GM12878 (cell line): ENCODE measurements at regions of chr6 and their contacts with region 1.

Region 1: GRCh38 chr6:138692058-138692977 is 81.3 kb upstream of the CCDC28A start:
- DNase-seq: no peak
- ATAC-seq: peak; percentile 74
- H3K4me3 ChIP-seq: peak overlapping the region; percentile 71
- H3K27ac ChIP-seq: no peak overlapping the region
- H3K4me1 ChIP-seq: no peaks in the 10 kb centered on the region
- H3K27me3 ChIP-seq: no peaks in the 10 kb centered on the region
- CTCF ChIP-seq: peak; percentile 58 to 74 (median 72); a peak in 5 of 6 replicates
- EP300 ChIP-seq: no peak
- POLR2A ChIP-seq: no peak
- RAD21 ChIP-seq: peak; percentile 37; the same call in 1 of the 2 replicates

Region 2: DNA sequence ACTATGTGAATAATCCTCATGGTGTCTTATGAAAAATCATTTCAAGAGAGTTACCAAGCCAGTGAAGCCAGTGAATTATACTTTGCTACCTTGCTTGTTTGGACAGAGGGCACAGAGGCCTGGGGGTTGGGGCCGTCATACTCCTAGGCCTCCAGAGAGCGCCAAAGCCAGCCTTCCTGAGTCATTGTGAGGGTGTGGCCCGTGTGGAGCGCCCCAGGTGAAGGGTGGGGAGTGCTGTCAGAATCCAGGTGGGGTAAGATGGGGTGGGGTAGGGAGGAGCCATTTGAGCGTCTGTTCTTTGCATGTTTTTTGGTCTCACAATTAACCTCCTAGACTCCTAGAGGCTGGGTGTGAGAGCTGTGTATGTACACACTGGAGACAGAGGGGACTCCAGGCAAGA is 656.2 kb before region 1 on chr6:
- CTCF ChIA-PET with region 1: no interaction called
- POLR2A ChIA-PET with region 1: no interaction called
- RAD21 ChIA-PET with region 1: no interaction called
- SMC1A ChIA-PET with region 1: no interaction called
- in situ Hi-C with region 1: no loop called
- intact Hi-C with region 1: no loop called
- DNase-seq: no peak
- ATAC-seq: no peak
- H3K4me3 ChIP-seq: no peak overlapping the region
- H3K27ac ChIP-seq: no peak overlapping the region
- H3K4me1 ChIP-seq: no peaks in the 10 kb centered on the region
- H3K27me3 ChIP-seq: no peaks in the 10 kb centered on the region; a peak in 1 of 4 replicates
- CTCF ChIP-seq: no peak
- EP300 ChIP-seq: no peak
- POLR2A ChIP-seq: no peak
- RAD21 ChIP-seq: no peak

Region 3: DNA sequence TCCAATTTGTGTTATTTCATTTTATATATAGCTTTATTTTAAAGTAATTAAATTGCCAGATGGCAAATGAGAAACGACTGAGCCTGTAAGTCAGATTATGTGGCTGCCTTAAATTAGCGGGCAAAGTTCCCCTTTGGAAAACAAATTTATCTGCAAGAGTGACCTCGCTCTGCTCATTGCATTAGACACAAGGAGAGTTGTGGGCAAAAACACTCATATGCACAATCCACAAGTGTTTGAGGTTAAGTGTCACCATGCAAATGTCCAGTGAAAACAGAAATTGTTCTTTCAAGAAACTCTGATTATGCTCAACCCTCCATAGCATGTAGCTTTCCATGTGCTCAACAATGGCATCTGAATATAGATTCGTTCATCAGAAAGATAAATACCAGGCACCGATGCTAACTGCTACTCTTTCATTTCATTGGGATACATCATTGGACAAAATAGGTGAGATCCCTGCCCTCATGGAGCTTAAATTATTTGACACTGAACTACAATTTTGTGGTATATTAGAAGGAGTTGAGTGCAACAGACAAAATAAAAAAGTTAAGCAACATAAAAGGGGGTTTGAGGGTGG is 191.4 kb before region 1 on chr6:
- CTCF ChIA-PET with region 1: no interaction called
- POLR2A ChIA-PET with region 1: no interaction called
- RAD21 ChIA-PET with region 1: no interaction called
- SMC1A ChIA-PET with region 1: no interaction called
- in situ Hi-C with region 1: no loop called
- intact Hi-C with region 1: no loop called
- DNase-seq: no peak
- ATAC-seq: no peak
- H3K4me3 ChIP-seq: no peak overlapping the region
- H3K27ac ChIP-seq: no peak overlapping the region
- H3K4me1 ChIP-seq: no peaks in the 10 kb centered on the region
- H3K27me3 ChIP-seq: peaks cover 0 to 10% of the 10 kb centered on the region in 2 experiments; a peak in 2 of 4 replicates
- CTCF ChIP-seq: no peak
- EP300 ChIP-seq: no peak
- POLR2A ChIP-seq: no peak
- RAD21 ChIP-seq: no peak

Region 4: DNA sequence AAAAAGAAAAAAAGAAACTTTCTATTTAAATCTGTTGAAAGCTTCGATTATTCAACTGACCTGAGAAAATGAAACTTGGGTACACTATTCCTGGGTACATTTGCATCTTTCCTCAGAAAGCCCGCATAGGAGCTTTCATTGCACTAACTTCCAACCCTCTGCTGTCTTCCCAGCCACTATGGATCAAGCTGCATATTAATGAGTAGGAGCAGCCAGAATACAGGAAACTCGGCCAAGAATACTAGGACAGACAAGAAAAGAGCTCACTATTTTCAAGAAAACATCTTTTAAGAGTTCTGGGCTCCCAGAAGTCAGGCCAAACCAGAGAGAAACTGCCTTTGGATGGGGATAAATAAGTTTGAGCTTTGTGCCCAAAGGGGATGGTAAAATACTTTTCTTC is 53.7 kb before region 1 on chr6:
- CTCF ChIA-PET with region 1: interaction called, 29 read pairs
- POLR2A ChIA-PET with region 1: interaction called, 8 read pairs
- RAD21 ChIA-PET with region 1: interaction called, 24 read pairs
- SMC1A ChIA-PET with region 1: interaction called, 12 read pairs
- in situ Hi-C with region 1: no loop called
- intact Hi-C with region 1: no loop called
- DNase-seq: no peak
- ATAC-seq: no peak; the same call in 1 of the 3 replicates
- H3K4me3 ChIP-seq: peak overlapping the region; percentile 52; the same call in 1 of the 2 replicates
- H3K27ac ChIP-seq: no peak overlapping the region
- H3K4me1 ChIP-seq: no peaks in the 10 kb centered on the region
- H3K27me3 ChIP-seq: no peaks in the 10 kb centered on the region
- CTCF ChIP-seq: no peak
- EP300 ChIP-seq: no peak
- POLR2A ChIP-seq: no peak
- RAD21 ChIP-seq: no peak

Region 5: DNA sequence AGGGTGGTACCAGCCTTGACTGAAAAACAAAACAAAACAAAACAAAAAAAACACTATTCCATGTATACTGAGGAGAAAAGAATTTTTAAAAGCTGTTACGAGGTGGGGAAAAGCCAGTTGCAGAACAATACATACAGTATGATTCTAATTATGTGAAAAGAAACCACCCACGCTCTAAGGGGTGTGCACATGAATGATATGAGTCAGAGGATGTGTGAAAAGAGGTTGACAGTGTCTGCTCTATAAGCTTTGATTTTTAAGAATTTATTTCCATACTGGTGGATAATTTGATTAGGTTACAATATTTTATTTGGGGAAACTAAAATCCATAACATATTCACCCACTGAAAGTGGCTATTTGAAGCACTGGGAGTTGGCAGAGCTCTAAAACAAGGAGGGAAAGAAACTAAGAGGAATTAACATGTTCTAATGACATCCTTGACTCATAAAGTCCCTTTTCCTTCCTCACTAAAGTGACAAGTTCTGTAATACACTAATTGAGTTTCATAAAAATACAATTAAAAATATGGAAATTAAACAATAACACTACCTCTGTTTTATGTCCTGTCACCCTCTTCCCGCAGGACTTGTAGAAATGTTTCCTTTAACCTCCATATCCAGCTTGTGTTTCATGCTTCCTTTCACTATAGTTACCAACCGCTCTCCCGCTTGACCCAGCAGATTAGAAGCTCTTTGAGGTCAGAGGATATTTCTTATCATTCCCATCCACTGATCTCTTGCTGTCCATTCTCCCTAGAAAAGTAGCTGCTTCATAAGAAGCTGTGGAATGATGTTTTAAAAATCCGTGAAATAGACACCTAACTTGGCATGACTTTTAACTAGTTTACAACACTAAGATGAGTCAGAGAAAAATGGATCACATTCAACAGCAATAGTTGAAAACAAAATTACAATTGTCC is 37.3 kb before region 1 on chr6:
- CTCF ChIA-PET with region 1: interaction called, 9 read pairs
- POLR2A ChIA-PET with region 1: no interaction called
- RAD21 ChIA-PET with region 1: interaction called, 4 read pairs
- SMC1A ChIA-PET with region 1: interaction called, 15 read pairs
- in situ Hi-C with region 1: no loop called
- intact Hi-C with region 1: no loop called
- DNase-seq: peak; percentile 50
- ATAC-seq: peak; percentile 98
- H3K4me3 ChIP-seq: no peak overlapping the region
- H3K27ac ChIP-seq: no peak overlapping the region
- H3K4me1 ChIP-seq: peaks cover 9% of the 10 kb centered on the region
- H3K27me3 ChIP-seq: no peaks in the 10 kb centered on the region
- CTCF ChIP-seq: no peak
- EP300 ChIP-seq: peak; percentile 71 to 95; a peak in 3 of 4 replicates
- POLR2A ChIP-seq: no peak
- RAD21 ChIP-seq: no peak

Region 6: DNA sequence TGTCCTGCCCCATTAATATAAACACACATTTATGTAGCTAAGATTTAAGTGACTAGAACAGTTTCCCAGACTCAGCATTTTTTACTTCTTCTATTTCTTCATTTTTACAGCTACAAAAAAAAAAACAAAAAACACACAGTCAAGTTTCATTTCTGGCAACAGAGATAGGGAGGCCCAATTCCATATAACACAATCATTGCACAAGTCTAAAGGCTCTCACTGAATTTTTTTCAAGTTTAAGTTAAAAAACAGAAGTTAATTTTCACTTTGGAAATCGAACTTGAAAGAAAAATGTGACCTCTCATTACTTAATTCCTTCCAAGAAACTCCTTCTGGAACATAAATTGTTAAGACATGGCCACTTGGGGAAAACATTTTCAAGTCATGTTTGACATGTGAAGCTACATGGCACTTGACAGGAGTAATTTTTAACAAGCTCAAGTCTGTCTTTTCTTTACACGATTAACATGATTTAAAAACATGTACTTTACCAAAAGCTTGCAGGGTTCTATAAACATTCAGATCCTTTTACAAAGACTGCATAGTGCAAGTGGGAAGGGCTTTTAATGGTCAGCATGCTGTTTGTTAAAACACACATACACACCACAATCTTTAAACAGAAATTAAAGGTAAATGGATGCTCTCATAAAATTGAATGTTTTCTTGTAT is 18.8 kb before region 1 on chr6:
- CTCF ChIA-PET with region 1: interaction called, 77 read pairs
- POLR2A ChIA-PET with region 1: interaction called, 5 read pairs
- RAD21 ChIA-PET with region 1: interaction called, 3 read pairs
- SMC1A ChIA-PET with region 1: interaction called, 11 read pairs
- in situ Hi-C with region 1: no loop called
- intact Hi-C with region 1: no loop called
- DNase-seq: no peak
- ATAC-seq: no peak
- H3K4me3 ChIP-seq: no peak overlapping the region
- H3K27ac ChIP-seq: no peak overlapping the region
- H3K4me1 ChIP-seq: no peaks in the 10 kb centered on the region
- H3K27me3 ChIP-seq: no peaks in the 10 kb centered on the region
- CTCF ChIP-seq: no peak
- EP300 ChIP-seq: no peak
- POLR2A ChIP-seq: no peak
- RAD21 ChIP-seq: no peak

Region 7: DNA sequence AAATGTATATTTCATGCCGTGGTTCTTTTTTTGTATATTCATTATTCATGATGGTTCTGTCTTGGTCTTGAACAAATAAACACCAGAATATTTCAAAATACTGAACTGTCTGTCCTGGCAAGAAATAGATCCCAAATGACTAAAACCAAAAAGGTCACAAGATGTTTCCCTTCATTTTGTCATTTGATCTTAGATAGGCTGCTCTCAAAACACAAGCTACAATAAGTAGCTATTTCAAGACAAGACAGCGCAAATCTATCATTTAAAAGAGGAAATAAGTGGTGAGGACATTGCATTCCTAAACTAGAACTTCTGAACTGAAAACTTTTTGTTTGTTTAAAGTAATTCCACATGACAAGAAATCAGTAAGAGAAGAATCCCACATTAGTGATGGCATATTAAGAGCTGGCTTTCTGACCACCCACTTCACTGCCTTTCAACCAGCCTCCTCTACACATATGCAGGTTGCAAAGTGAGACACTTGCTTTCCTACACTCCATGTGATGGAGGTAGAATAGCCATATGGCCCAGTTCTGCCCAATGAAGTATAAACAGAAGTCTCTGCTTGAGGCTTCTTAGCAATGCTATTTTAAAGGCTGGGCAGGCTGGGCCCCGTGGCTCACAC is 26.8 kb after region 1 on chr6:
- CTCF ChIA-PET with region 1: interaction called, 5 read pairs
- POLR2A ChIA-PET with region 1: interaction called, 3 read pairs
- RAD21 ChIA-PET with region 1: interaction called, 3 read pairs
- SMC1A ChIA-PET with region 1: interaction called, 10 read pairs
- in situ Hi-C with region 1: no loop called
- intact Hi-C with region 1: no loop called
- DNase-seq: no peak
- ATAC-seq: peak; percentile 47
- H3K4me3 ChIP-seq: no peak overlapping the region
- H3K27ac ChIP-seq: no peak overlapping the region
- H3K4me1 ChIP-seq: no peaks in the 10 kb centered on the region
- H3K27me3 ChIP-seq: no peaks in the 10 kb centered on the region
- CTCF ChIP-seq: no peak
- EP300 ChIP-seq: no peak
- POLR2A ChIP-seq: no peak
- RAD21 ChIP-seq: no peak

Region 8: DNA sequence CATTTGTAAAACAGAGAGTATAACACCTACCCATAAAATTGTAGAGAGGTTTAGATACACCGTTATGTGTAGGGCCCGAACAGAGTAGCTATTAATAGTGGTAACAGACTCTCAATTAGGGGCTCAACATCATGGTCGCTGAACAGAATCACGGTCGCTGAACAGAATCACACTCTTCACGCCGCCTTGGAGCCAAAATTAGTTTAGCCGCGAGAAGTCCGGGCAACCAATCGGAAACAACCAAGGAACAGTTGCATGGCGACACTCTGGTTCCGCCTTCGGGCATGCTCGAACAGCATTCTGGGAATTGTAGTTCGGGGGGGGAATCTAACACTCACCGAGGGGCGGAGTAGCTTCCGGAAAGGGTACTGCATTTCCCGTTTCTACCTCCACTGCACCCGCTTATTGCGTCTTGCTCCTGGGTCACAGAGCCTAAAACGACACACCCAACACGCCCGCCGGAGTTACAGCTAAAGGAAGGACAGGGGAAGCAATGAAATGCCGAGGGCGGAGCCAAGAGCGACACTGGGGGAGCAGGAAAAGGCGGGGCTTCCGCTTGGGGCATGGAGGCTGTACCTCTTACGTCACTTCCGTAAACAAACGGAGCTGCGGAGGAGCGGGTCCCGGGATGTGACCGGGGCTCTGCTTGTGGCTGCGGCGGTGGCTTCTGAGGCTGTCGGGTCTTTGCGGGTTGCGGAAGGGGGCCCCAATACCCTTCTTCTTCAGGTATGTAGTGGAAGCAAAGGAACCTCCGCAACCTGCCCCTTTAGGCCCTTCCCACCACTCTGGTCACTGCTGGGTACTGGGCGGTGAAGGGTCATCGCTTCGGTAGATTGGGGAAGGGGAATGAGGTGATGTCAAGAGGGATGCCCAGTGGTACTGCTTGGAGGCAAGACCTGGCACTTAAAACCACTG is 81.1 kb after region 1 on chr6 and contains the start of gene CCDC28A:
- CTCF ChIA-PET with region 1: interaction called, 68 read pairs
- POLR2A ChIA-PET with region 1: interaction called, 5 read pairs
- RAD21 ChIA-PET with region 1: interaction called, 3 read pairs
- SMC1A ChIA-PET with region 1: interaction called, 57 read pairs
- in situ Hi-C with region 1: no loop called
- intact Hi-C with region 1: loop called (anchors 2 kb)
- DNase-seq: peak; percentile 93
- ATAC-seq: peak; percentile 94
- H3K4me3 ChIP-seq: peak within 1 kb of the TSS; percentile 89
- H3K27ac ChIP-seq: peak within 1 kb of the TSS; percentile 97
- H3K4me1 ChIP-seq: peaks cover 12% of the 10 kb centered on the region
- H3K27me3 ChIP-seq: no peaks in the 10 kb centered on the region
- CTCF ChIP-seq: no peak
- EP300 ChIP-seq: no peak; a peak in 1 of 4 replicates
- POLR2A ChIP-seq: peak; percentile 79
- RAD21 ChIP-seq: no peak
- polyA plus RNA-seq, gene CCDC28A: 19.6 to 20.5 TPM